Dendritic cell treated with granulocyte-macrophage colony-stimulating factor and Interleukin-4, amounts not matched to agents 40 ng/mL and 50 ng/mL, for 4 days (primary cell): ENCODE measurements at regions of chr7 and their contacts with region 1.

Region 1: DNA sequence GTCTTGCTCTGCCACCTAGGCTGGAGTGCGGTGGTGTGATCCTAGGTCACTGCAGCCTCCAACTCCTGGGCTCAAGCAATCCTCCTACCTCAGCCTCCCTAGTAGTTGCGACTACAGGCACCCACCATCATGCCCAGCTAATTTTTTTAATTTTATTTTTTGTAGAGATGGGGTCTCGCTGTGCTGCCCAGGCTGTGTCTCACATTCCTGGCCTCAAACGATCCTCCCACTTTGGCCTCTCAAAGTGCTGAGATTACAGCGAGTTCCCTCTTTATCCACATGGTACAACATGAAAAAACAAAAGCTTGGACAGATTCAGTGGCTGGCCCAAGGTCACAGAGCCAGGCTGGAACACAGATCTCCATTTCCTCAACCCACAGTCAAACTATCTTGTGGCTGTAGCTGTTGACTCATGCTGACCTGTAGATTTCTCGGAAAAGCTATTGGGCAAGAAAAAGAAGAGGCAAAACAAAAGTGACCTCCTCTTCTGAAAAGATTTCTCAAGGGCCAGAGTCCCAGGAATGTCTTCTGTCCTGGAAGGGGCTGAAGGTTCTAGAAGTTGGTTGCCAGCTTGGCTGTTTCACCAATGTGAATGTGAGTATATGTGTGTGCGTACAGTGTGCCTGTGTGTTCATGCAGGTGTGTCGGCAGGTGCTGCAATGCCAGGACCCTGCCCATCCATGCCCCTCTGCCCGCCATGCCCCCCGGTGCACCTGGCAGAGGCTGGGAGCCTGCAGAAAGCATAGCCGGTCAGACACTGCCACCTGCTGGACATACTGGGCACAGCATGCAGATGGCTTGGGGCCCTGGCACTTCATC is 28.4 kb downstream of the TMEM130 start:
- H3K4me3 Mint-ChIP-seq: no peak overlapping the region
- H3K27ac Mint-ChIP-seq: no peak overlapping the region
- H3K4me1 Mint-ChIP-seq: peaks cover 9% of the 10 kb centered on the region
- H3K27me3 Mint-ChIP-seq: peaks cover 27% of the 10 kb centered on the region

Region 2: GRCh38 chr7:98294796-98295382 is 546.5 kb before region 1 on chr7:
- intact Hi-C with region 1: loop called (anchors 5 kb)
- H3K4me3 Mint-ChIP-seq: no peak overlapping the region
- H3K27ac Mint-ChIP-seq: peak overlapping the region; percentile 17
- H3K4me1 Mint-ChIP-seq: peaks cover 18% of the 10 kb centered on the region
- H3K27me3 Mint-ChIP-seq: no peaks in the 10 kb centered on the region

Region 3: GRCh38 chr7:98434095-98434494 is 407.3 kb before region 1 on chr7:
- intact Hi-C with region 1: loop called (anchors 1 kb)
- H3K4me3 Mint-ChIP-seq: no peak overlapping the region
- H3K27ac Mint-ChIP-seq: no peak overlapping the region
- H3K4me1 Mint-ChIP-seq: peaks cover 6% of the 10 kb centered on the region
- H3K27me3 Mint-ChIP-seq: peaks cover 14% of the 10 kb centered on the region

Region 4: GRCh38 chr7:98733036-98733435 is 108.4 kb before region 1 on chr7:
- intact Hi-C with region 1: loop called (anchors 2 kb)
- H3K4me3 Mint-ChIP-seq: no peak overlapping the region
- H3K27ac Mint-ChIP-seq: no peak overlapping the region
- H3K4me1 Mint-ChIP-seq: no peaks in the 10 kb centered on the region
- H3K27me3 Mint-ChIP-seq: peaks cover 2% of the 10 kb centered on the region

Region 5: GRCh38 chr7:98755128-98755898 is 86.1 kb before region 1 on chr7:
- intact Hi-C with region 1: loop called (anchors 5 kb)
- H3K4me3 Mint-ChIP-seq: no peak overlapping the region
- H3K27ac Mint-ChIP-seq: no peak overlapping the region
- H3K4me1 Mint-ChIP-seq: no peaks in the 10 kb centered on the region
- H3K27me3 Mint-ChIP-seq: peaks cover 16% of the 10 kb centered on the region

Region 6: DNA sequence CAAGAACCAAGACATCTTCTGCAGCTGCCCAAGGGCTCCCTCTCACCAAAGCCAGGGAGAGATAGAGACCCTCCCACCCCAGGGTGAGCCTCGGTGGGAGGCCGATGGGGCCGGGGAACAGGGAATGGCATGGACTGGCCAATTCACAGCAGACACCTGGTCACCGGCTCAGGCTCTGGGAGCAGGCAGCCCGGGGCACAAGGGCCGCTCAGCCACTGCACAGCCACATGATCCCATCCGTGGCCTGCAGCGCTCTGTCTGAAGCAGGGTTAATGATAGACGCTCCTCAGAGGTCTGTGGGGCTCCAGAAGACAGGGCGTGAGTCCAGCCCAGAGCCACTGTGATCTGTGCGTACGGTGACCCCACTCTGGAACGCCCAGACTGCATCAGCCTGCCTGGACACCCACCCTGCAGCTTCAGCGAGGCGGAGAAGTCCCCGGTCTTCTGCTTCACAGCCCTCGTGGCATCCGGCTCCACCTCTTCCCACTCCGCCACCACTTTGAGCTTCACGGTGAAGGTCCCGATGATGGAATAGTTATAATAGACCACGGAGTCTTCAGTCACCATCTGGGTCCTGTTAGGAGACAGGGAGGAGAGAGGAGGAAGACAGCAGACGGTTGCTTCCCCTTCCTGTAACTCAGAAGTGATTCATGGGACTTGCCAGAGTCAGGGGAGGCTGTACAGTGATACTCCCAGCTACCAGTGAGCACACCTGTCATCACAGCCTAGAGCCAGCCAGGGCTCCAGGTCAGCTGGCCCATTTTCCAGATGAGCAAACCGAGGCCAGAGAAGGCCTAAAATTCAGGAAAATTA is 14.4 kb after region 1 on chr7:
- intact Hi-C with region 1: no loop called
- H3K4me3 Mint-ChIP-seq: no peak overlapping the region
- H3K27ac Mint-ChIP-seq: no peak overlapping the region
- H3K4me1 Mint-ChIP-seq: peaks cover 10% of the 10 kb centered on the region
- H3K27me3 Mint-ChIP-seq: peaks cover 15% of the 10 kb centered on the region